Heart left ventricle (tissue), 16 donors: ENCODE measurements at regions of chr16 and their contacts with region 1.

Region 1: GRCh38 chr16:9499941-9500593 is 408.6 kb downstream of the HAPSTR1 start:
- DNase-seq: peak in 2 of 5 donors; percentile 30 to 36
- ATAC-seq: no peak
- H3K4me3 ChIP-seq: no peak overlapping the region
- H3K27ac ChIP-seq: no peak overlapping the region
- H3K4me1 ChIP-seq: peaks cover 0 to 4% (median 0%) of the 10 kb centered on the region in 12 donors
- H3K27me3 ChIP-seq: peaks cover 0 to 4% (median 0%) of the 10 kb centered on the region in 9 donors
- CTCF ChIP-seq: peak in 1 of 12 donors; percentile 14
- POLR2A ChIP-seq: no peak

Region 2: GRCh38 chr16:9308356-9308801 is 191.7 kb before region 1 on chr16:
- intact Hi-C with region 1: loop called in 1 of 10 experiments (anchors 10 kb)
- DNase-seq: no peak
- ATAC-seq: peak; percentile 53 to 81 (median 60)
- H3K4me3 ChIP-seq: no peak overlapping the region
- H3K27ac ChIP-seq: no peak overlapping the region
- H3K4me1 ChIP-seq: peaks cover 0 to 17% (median 0%) of the 10 kb centered on the region in 12 donors
- H3K27me3 ChIP-seq: peaks cover 0 to 4% (median 0%) of the 10 kb centered on the region in 9 donors
- CTCF ChIP-seq: no peak
- POLR2A ChIP-seq: no peak